Activated CD4-positive, alpha-beta T cell treated with anti-CD3 and anti-CD28 coated beads, Interleukin-2, amount 10 ng/mL, durations not matched to agents 24 days and 14 days (primary cell): ENCODE measurements at regions of chrX and their contacts with region 1.

Region 1: DNA sequence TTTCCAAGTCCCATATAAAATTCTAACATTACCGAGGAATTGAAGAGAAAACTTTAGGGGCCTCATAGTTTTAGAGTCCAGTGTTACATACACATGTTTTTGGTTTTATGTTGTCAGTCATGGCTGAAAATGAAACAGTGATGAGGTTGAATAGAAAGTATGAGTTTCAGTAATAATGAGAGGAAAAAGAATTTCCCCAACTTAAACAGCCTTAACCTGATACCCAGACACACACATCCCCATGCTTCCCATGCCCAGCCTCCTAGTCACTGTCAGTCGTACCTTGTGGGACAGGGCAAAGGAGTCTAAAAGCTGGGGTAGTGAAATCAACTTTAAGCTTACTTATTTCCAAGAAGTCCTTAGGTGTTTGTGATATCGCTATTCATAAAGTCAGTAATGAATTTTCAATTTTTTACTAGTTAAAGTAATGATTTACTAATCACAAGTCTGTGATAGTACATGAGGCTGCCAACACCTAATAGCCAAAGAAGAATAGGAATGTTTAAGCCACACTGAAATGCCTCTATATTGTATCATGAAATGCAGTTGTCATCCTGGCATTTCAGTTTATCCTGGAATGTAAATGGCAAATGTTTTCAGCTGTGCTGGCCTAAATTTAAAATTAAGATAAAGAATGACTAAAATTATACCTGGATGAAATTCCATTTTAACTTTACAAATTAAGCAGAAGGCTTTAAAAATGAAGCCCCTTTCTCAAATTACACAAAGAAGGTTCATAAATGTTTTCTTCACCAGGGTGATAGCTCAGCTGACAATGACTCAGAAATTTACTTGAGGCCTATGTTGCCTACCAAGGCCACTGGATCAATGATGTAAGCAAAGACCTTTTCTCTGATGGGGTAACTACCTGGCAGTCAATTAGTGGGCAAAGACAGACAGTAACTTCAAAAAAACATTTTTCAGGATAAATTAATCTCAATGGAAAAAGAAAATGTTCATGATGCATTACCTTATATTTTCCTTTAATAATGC is 24.2 kb upstream of the GPR34 start:
- DNase-seq: peak; percentile 55
- H3K4me3 Mint-ChIP-seq: peak overlapping the region; percentile 6
- H3K27ac Mint-ChIP-seq: peak overlapping the region; percentile 53
- H3K4me1 Mint-ChIP-seq: peaks cover 34% of the 10 kb centered on the region
- H3K27me3 Mint-ChIP-seq: no peaks in the 10 kb centered on the region

Region 2: DNA sequence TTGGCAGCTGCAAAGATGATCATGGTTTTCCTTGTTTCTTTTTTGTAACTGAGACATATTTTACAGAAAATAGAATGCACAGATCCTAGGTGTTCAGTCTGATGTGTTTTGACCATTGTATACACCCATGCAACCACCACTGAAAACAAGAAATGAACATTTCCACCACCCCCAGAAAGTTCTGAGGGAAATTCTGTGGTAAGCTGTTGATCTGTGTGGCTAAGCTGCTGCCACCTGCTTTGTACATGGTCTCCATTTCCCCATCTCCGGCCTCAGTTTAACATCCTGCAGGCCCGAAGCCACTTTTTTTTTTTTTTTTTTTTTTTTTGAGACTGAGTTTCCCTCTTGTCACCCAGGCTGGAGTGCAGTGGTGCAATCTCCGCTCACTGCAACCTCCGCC is 152.2 kb before region 1 on chrX:
- intact Hi-C with region 1: loop called (anchors 5 kb)
- DNase-seq: peak; percentile 77
- H3K4me3 Mint-ChIP-seq: peak overlapping the region; percentile 38
- H3K27ac Mint-ChIP-seq: peak overlapping the region; percentile 80
- H3K4me1 Mint-ChIP-seq: peaks cover 22% of the 10 kb centered on the region
- H3K27me3 Mint-ChIP-seq: no peaks in the 10 kb centered on the region

Region 3: GRCh38 chrX:41561045-41561444 is 103.6 kb before region 1 on chrX:
- intact Hi-C with region 1: loop called (anchors 1 kb)
- DNase-seq: peak; percentile 78
- H3K4me3 Mint-ChIP-seq: peak overlapping the region; percentile 8
- H3K27ac Mint-ChIP-seq: peak overlapping the region; percentile 64
- H3K4me1 Mint-ChIP-seq: peaks cover 26% of the 10 kb centered on the region
- H3K27me3 Mint-ChIP-seq: no peaks in the 10 kb centered on the region

Region 4: DNA sequence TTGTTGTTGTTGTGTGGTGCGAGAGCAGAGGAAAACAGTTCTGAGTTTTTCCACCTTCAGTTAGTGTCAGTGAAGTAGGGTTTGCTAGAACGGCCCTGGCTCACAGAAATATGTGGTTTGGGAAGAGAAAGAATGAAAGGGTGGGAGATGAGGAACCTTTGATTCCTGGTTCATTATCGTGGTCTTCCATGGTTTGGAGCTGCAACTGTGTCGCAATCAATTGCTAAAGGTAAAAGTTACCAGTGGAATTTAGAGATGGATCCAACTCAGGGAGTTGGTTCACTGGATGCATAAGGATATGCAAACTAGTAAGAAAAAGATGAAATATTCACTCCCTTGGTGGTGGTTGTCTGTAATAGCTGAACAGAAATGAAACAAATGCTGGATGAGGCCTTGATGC is 11.5 kb before region 1 on chrX:
- intact Hi-C with region 1: no loop called
- DNase-seq: no peak
- H3K4me3 Mint-ChIP-seq: no peak overlapping the region
- H3K27ac Mint-ChIP-seq: no peak overlapping the region
- H3K4me1 Mint-ChIP-seq: no peaks in the 10 kb centered on the region
- H3K27me3 Mint-ChIP-seq: no peaks in the 10 kb centered on the region

Region 5: GRCh38 chrX:41688835-41689234 is 24.2 kb after region 1 on chrX and contains the start of gene GPR34:
- intact Hi-C with region 1: loop called (anchors 1 kb)
- DNase-seq: peak; percentile 65
- H3K4me3 Mint-ChIP-seq: no peak within 1 kb of the TSS
- H3K27ac Mint-ChIP-seq: no peak within 1 kb of the TSS
- H3K4me1 Mint-ChIP-seq: peaks cover 24% of the 10 kb centered on the region
- H3K27me3 Mint-ChIP-seq: no peaks in the 10 kb centered on the region
- total RNA-seq, gene GPR34: 0.16 and 0.43 TPM in 2 replicates

Region 6: DNA sequence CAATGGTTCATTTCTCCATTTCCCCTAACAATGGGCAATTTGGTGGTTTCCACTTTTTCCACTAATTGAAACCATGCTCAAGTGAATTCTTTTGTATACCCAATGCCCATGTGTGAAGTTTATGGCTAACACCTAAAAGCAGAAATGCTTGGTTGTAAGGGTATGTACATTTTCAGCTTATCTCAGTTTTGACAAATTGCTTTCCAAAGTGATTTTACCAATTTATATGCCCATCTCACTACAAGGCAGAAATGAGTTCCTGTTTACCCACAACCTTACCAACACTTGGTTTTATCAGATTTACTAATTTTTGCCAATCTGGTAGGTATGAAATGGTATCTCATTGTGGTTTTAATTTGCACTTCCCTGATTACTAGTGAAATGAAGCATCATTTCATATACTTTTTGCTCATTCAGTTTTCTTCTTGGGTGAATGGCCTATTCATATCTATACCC is 39.0 kb after region 1 on chrX:
- intact Hi-C with region 1: loop called (anchors 2 kb)
- DNase-seq: no peak
- H3K4me3 Mint-ChIP-seq: no peak overlapping the region
- H3K27ac Mint-ChIP-seq: no peak overlapping the region
- H3K4me1 Mint-ChIP-seq: peaks cover 24% of the 10 kb centered on the region
- H3K27me3 Mint-ChIP-seq: no peaks in the 10 kb centered on the region

Region 7: DNA sequence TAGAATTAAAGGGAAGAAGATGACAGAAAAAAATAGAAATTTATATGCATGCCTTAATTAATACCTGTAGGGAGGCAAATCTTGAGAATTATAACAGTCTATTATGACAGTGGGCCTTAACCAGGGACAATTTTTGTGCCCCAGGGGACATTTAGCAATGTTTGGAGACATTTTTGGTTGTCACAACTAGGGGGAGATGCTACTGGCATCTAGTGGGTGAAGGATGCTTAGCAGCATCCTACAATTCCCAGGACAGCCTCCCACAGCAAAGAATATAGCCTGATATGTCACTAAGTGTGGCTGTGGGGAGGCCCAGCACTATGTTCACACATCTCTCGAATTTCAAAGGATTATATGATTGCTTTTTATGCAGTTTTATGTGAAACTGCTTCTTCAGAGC is 69.9 kb after region 1 on chrX:
- intact Hi-C with region 1: loop called (anchors 1 kb)
- DNase-seq: peak; percentile 58
- H3K4me3 Mint-ChIP-seq: peak overlapping the region; percentile 34
- H3K27ac Mint-ChIP-seq: peak overlapping the region; percentile 85
- H3K4me1 Mint-ChIP-seq: peaks cover 25% of the 10 kb centered on the region
- H3K27me3 Mint-ChIP-seq: no peaks in the 10 kb centered on the region